Heart left ventricle (tissue), 16 donors: ENCODE measurements at regions of chr12 and their contacts with region 1.

Region 1: DNA sequence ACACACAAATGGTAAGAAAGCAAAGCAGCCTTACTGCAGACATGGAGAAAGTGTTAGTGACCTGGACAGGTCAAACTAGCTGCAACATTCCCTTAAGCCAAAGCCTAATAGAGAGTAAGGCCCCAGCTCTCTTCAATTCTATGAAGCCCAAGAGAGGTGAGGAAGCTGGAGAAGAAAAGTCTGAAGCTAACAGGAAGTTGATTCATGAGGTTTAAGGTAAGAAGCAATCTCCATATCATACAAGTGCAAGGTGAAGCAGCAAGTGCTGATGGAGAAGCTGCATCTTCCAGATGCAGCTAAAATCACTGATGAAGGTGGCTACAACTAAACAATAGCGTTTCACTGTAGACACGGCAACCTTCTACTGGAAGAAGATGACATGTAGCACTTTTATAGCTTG is 53.5 kb downstream of the PPP1R12A start:
- DNase-seq: no peak
- ATAC-seq: no peak
- H3K4me3 ChIP-seq: no peak overlapping the region
- H3K27ac ChIP-seq: peak overlapping the region in 1 of 12 donors; percentile 0
- H3K4me1 ChIP-seq: peaks cover 0 to 62% (median 37%) of the 10 kb centered on the region in 12 donors
- H3K27me3 ChIP-seq: no peaks in the 10 kb centered on the region
- CTCF ChIP-seq: no peak
- POLR2A ChIP-seq: no peak

Region 2: DNA sequence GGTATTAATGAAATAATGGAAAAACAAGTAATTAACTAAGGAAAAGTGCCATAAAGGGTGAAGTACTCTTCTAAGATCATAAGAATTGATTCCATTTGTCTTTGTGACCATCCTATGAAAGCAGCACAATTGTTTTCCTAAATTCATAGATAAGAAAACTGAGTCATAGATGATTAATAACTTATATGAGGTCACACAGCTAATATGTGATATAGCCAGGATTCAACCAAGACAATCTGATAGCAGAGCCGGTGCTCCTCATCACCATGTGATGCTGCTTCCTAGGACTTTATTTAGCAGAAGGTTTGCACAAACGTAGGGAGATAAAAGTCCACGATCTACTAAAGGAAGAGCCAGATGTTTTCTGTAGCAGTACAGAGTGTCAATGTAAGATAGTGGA is 1198.3 kb before region 1 on chr12:
- intact Hi-C with region 1: no loop called
- DNase-seq: no peak
- ATAC-seq: no peak
- H3K4me3 ChIP-seq: no peak overlapping the region
- H3K27ac ChIP-seq: no peak overlapping the region
- H3K4me1 ChIP-seq: no peaks in the 10 kb centered on the region
- H3K27me3 ChIP-seq: no peaks in the 10 kb centered on the region
- CTCF ChIP-seq: no peak
- POLR2A ChIP-seq: no peak

Region 3: DNA sequence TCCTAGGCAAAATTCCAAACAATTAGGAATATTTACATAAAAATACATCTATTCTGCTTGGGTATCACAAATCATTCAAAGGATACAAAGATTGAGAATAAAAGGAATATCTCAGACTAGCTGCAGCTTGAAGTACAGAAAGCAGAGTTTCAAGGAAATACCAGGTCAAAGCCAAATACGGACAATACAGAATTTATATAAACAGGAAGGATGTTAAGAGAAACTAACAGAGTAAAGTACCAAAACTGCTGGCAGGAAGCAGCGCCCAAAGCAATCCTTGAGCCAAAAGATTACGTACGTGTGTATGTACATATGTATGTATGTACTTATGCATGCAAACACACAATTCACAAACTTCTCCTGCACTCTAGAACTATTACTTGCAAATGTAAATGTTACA is 33.0 kb before region 1 on chr12:
- intact Hi-C with region 1: loop called in 2 of 10 experiments (anchors 2 kb)
- DNase-seq: no peak
- ATAC-seq: no peak
- H3K4me3 ChIP-seq: no peak overlapping the region
- H3K27ac ChIP-seq: peak overlapping the region in 4 of 12 donors; percentile 9 to 51 (median 34)
- H3K4me1 ChIP-seq: peaks cover 0 to 39% (median 19%) of the 10 kb centered on the region in 12 donors
- H3K27me3 ChIP-seq: no peaks in the 10 kb centered on the region
- CTCF ChIP-seq: no peak
- POLR2A ChIP-seq: no peak